PC-3 (cell line): ENCODE measurements at regions of chr17 and their contacts with region 1.

Region 1: DNA sequence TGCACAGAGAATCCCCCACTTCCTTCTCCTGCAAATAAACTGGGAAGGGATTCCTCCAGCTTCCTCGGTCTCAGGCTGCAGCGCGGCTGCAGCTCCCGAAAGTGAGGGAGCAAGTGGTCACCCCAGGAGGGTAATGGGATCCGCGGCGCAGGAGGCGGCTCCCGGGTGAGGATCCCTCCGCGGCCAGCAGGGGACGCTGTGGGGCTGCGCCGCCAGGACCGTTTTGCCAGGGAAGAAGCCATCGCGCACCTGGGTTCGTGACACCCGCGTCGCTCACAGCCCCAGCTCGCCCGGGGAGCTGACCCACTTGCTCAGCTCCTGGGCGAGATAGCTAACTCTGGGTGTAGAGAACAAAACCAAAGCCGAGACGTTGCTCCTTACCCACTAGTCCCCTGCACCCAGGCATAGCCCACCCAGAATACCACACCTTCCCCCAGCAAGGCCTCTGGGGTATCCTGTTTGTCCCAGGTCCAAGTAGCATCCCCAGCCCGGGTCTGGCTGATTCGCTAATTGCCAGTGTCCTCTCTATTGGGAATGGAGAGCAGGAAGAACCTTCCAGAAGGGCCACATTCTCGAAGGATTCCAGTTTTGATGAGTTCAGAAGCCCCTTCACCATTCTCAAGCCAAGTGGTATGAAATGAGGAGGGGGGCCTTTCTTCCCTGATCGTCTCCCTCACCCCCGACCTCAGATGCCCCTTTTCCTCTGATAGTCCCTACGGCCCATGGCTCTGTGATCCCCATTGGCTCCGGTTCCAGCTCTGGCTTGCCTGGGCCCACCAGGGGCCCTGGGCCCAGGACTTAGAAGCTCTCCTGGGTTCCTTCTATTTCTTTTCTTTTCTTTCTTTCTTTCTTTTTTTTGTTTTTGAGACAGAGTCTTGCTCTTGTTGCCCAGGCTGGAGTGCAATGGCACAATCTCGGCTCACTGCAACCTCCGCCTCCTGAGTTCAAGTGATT is 14.1 kb downstream of the CYGB start:
- DNase-seq: peak; percentile 88
- ATAC-seq: peak; percentile 53
- H3K4me3 ChIP-seq: peak overlapping the region; percentile 46; the same call in 1 of the 2 replicates
- H3K27ac ChIP-seq: no peak overlapping the region
- H3K4me1 ChIP-seq: peaks cover 30% of the 10 kb centered on the region
- H3K27me3 ChIP-seq: no peaks in the 10 kb centered on the region
- CTCF ChIP-seq: peak; percentile 99

Region 2: GRCh38 chr17:76547184-76547641 is 23.9 kb after region 1 on chr17:
- CTCF ChIA-PET with region 1: interaction called, 23 read pairs
- POLR2A ChIA-PET with region 1: no interaction called
- intact Hi-C with region 1: loop called (anchors 1 kb)
- DNase-seq: peak; percentile 80
- ATAC-seq: peak; percentile 61
- H3K4me3 ChIP-seq: peak overlapping the region; percentile 22; the same call in 1 of the 2 replicates
- H3K27ac ChIP-seq: peak overlapping the region; percentile 97
- H3K4me1 ChIP-seq: peaks cover 35% of the 10 kb centered on the region
- H3K27me3 ChIP-seq: no peaks in the 10 kb centered on the region
- CTCF ChIP-seq: peak; percentile 90

Region 3: DNA sequence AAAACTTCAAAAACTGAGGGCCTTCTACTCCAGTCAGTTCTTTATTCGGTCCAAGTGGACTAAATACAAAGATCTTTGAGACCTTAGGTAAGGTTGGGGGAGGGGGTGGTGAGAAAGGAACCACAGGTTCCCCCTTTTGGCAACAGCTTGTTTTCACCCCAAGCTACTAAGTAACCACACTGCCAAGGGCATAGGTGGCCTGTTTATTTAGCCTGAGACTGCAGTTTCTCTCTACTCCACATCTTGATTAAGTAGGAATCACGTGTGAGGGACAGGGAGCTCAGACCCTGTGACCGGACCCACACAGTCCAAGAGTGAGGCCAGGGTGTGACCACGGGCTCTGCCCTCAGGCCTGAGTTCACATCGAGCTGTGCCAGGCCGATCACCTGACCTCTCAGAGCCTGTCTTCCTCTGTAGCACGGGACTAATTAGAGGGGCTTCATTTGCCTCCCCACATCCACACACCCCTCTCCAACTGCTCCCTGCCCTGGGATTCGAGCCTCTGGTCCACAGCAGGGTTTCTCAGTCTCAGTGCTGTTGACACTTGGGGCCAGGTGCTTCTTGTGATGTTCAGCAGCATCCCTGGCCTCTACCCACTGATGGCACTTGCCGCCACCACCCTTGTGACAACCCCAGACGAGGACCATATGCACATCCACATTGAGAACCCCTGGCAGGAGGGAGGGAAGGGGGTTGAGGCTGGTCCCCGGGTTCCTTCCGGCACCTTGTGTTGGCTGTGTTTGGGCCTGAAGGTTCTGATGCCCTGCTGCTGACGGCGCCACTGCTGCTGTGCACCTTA is 44.5 kb after region 1 on chr17:
- CTCF ChIA-PET with region 1: interaction called, 4 read pairs
- POLR2A ChIA-PET with region 1: interaction called, 20 read pairs
- intact Hi-C with region 1: no loop called
- DNase-seq: peak; percentile 22
- ATAC-seq: peak; percentile 10
- H3K4me3 ChIP-seq: no peak overlapping the region
- H3K27ac ChIP-seq: peak overlapping the region; percentile 2; the same call in 1 of the 2 replicates
- H3K4me1 ChIP-seq: peaks cover 27% of the 10 kb centered on the region
- H3K27me3 ChIP-seq: no peaks in the 10 kb centered on the region
- CTCF ChIP-seq: no peak

Region 4: DNA sequence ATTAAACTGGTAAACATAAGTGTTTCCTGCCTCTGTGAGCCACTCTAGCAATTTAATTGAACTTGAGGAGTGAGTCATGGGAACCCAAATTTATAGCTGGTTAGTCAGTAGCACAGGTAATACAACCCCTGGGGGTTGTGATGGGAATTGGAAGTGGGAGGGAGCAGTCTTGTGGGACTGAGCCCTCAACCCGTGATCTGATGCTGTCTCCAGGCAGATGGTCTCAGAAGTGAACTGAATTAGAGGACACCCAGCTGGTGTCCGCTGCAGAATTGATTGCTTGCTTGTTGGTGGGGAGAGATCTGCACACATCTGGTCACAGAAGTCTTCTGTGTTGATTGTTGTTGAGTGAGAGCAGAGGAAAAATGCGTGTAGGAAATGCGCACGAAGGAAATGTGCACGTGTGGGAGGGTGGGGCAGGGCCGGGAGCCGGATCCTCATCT is 70.0 kb after region 1 on chr17:
- CTCF ChIA-PET with region 1: interaction called, 13 read pairs
- POLR2A ChIA-PET with region 1: no interaction called
- intact Hi-C with region 1: loop called (anchors 2 kb)
- DNase-seq: peak; percentile 99
- ATAC-seq: peak; percentile 97
- H3K4me3 ChIP-seq: no peak overlapping the region
- H3K27ac ChIP-seq: peak overlapping the region; percentile 84
- H3K4me1 ChIP-seq: peaks cover 34% of the 10 kb centered on the region
- H3K27me3 ChIP-seq: no peaks in the 10 kb centered on the region
- CTCF ChIP-seq: peak; percentile 57

Region 5: GRCh38 chr17:76641501-76641900 is 118.1 kb after region 1 on chr17:
- CTCF ChIA-PET with region 1: no interaction called
- POLR2A ChIA-PET with region 1: no interaction called
- intact Hi-C with region 1: no loop called
- DNase-seq: peak; percentile 98
- ATAC-seq: peak; percentile 88
- H3K4me3 ChIP-seq: no peak overlapping the region
- H3K27ac ChIP-seq: 0 out of 2 replicates have a peak overlapping the region, but pooled peaks have one; percentile 1
- H3K4me1 ChIP-seq: peaks cover 28% of the 10 kb centered on the region
- H3K27me3 ChIP-seq: no peaks in the 10 kb centered on the region
- CTCF ChIP-seq: no peak

Region 6: GRCh38 chr17:76681222-76682137 is 158.1 kb after region 1 on chr17:
- CTCF ChIA-PET with region 1: interaction called, 3 read pairs
- POLR2A ChIA-PET with region 1: no interaction called
- intact Hi-C with region 1: loop called (anchors 2 kb)
- DNase-seq: peak; percentile 83
- ATAC-seq: peak; percentile 86
- H3K4me3 ChIP-seq: no peak overlapping the region
- H3K27ac ChIP-seq: no peak overlapping the region
- H3K4me1 ChIP-seq: no peaks in the 10 kb centered on the region
- H3K27me3 ChIP-seq: no peaks in the 10 kb centered on the region
- CTCF ChIP-seq: peak; percentile 96